ENCODE measurements at regions of chr13 and their contacts with region 1.

Region 1: GRCh38 chr13:49840266-49840665 is 47.8 kb upstream of the KPNA3 start:
- DNase-seq: no peak
- H3K4me3 ChIP-seq: no peak overlapping the region
- H3K27ac ChIP-seq: no peak overlapping the region
- H3K4me1 ChIP-seq: no peaks in the 10 kb centered on the region
- H3K27me3 ChIP-seq: no peaks in the 10 kb centered on the region
- CTCF ChIP-seq: no peak
- POLR2A ChIP-seq: no peak

Region 2: GRCh38 chr13:49669735-49670309 is 170.4 kb before region 1 on chr13:
- intact Hi-C with region 1: loop called (anchors 5 kb)
- DNase-seq: peak; percentile 60 to 66
- H3K4me3 ChIP-seq: no peak overlapping the region
- H3K27ac ChIP-seq: no peak overlapping the region
- H3K4me1 ChIP-seq: no peaks in the 10 kb centered on the region
- H3K27me3 ChIP-seq: no peaks in the 10 kb centered on the region
- CTCF ChIP-seq: peak; percentile 21 to 88 (median 68)
- POLR2A ChIP-seq: no peak